Panc1 (cell line): ENCODE measurements at regions of chr3 and their contacts with region 1.

Region 1: DNA sequence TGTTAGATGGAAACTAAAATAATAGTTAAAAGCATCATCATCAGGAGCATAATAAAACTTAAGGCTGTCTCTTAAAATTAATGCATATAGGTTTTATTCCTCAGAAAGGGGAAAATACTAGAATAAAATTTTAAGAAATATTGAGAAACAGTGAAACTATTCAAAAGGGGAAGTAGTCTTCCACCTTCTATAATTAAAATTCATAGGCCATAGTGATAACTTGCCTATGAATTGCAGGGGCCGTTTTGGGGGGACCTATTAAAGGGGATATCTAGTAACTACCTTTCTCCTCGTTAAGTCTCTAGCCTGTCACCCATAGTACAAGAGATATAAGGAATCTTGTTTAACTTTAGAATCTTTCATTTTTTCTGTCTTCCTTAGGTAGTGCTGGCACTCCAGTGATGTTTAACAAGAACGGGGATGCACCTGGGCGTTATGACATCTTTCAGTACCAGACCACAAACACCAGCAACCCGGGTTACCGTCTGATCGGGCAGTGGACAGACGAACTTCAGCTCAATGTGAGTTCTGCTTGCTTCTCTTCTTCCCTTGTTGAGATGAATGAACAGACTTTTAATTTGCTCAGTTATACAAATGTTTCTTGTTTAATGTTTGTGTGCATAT is 600.4 kb downstream of the GRM7 start:
- DNase-seq: no peak
- ATAC-seq: no peak
- H3K4me3 ChIP-seq: no peak overlapping the region
- H3K27ac ChIP-seq: no peak overlapping the region
- H3K4me1 ChIP-seq: no peaks in the 10 kb centered on the region
- H3K27me3 ChIP-seq: no peaks in the 10 kb centered on the region
- CTCF ChIP-seq: no peak

Region 2: GRCh38 chr3:7707187-7707586 is 245.9 kb after region 1 on chr3:
- CTCF ChIA-PET with region 1: no interaction called
- POLR2A ChIA-PET with region 1: no interaction called
- in situ Hi-C with region 1: no loop called
- intact Hi-C with region 1: no loop called
- DNase-seq: no peak
- ATAC-seq: no peak
- H3K4me3 ChIP-seq: no peak overlapping the region
- H3K27ac ChIP-seq: no peak overlapping the region
- H3K4me1 ChIP-seq: no peaks in the 10 kb centered on the region
- H3K27me3 ChIP-seq: no peaks in the 10 kb centered on the region
- CTCF ChIP-seq: no peak

Region 3: GRCh38 chr3:7821858-7822257 is 360.5 kb after region 1 on chr3:
- CTCF ChIA-PET with region 1: no interaction called
- POLR2A ChIA-PET with region 1: no interaction called
- in situ Hi-C with region 1: no loop called
- intact Hi-C with region 1: no loop called
- DNase-seq: no peak
- ATAC-seq: no peak
- H3K4me3 ChIP-seq: no peak overlapping the region
- H3K27ac ChIP-seq: no peak overlapping the region
- H3K4me1 ChIP-seq: no peaks in the 10 kb centered on the region
- H3K27me3 ChIP-seq: no peaks in the 10 kb centered on the region
- CTCF ChIP-seq: no peak

Region 4: DNA sequence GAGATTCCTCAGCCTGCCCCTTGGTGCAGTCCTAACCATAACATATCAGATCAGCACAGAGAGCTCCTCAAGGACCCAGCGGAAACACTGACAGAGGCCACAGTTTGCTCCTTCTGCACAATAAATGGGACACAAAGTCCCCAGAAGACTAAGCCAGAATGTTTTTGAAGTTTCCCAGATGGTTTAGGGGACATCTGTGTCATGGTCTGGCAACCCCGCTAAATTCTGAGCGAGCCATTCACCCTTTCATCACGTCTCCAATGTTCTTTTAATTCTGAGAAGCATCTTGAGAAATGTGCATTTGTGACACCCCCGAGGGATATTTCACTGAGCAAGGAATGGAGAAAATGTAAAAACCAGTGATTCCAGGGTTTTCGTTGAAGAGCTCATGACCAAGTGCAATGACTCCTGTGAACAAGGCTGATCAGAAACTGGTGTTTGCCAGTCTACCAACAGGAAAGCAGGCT is 975.4 kb after region 1 on chr3:
- CTCF ChIA-PET with region 1: interaction called, 11 read pairs
- POLR2A ChIA-PET with region 1: no interaction called
- in situ Hi-C with region 1: no loop called
- intact Hi-C with region 1: no loop called
- DNase-seq: no peak
- ATAC-seq: no peak
- H3K4me3 ChIP-seq: no peak overlapping the region
- H3K27ac ChIP-seq: no peak overlapping the region
- H3K4me1 ChIP-seq: no peaks in the 10 kb centered on the region
- H3K27me3 ChIP-seq: no peaks in the 10 kb centered on the region
- CTCF ChIP-seq: no peak